Mammary epithelial cell (primary cell): ENCODE measurements at regions of chr5 and their contacts with region 1.

Region 1: GRCh38 chr5:157328277-157328912 is 62.5 kb downstream of the CYFIP2 start:
- DNase-seq: peak; percentile 52
- H3K4me3 ChIP-seq: peak overlapping the region in 1 of 3 experiments; percentile 34
- H3K27ac ChIP-seq: no peak overlapping the region
- H3K4me1 ChIP-seq: no peaks in the 10 kb centered on the region
- H3K27me3 ChIP-seq: no peaks in the 10 kb centered on the region
- CTCF ChIP-seq: peak; percentile 97

Region 2: GRCh38 chr5:157308836-157309465 is 19.4 kb before region 1 on chr5:
- CTCF ChIA-PET with region 1: no interaction called
- dilution Hi-C with region 1: no loop called
- in situ Hi-C with region 1: no loop called
- intact Hi-C with region 1: no loop called
- DNase-seq: no peak
- H3K4me3 ChIP-seq: no peak overlapping the region
- H3K27ac ChIP-seq: no peak overlapping the region
- H3K4me1 ChIP-seq: no peaks in the 10 kb centered on the region
- H3K27me3 ChIP-seq: no peaks in the 10 kb centered on the region
- CTCF ChIP-seq: peak in 1 of 2 donors; percentile 11

Region 3: DNA sequence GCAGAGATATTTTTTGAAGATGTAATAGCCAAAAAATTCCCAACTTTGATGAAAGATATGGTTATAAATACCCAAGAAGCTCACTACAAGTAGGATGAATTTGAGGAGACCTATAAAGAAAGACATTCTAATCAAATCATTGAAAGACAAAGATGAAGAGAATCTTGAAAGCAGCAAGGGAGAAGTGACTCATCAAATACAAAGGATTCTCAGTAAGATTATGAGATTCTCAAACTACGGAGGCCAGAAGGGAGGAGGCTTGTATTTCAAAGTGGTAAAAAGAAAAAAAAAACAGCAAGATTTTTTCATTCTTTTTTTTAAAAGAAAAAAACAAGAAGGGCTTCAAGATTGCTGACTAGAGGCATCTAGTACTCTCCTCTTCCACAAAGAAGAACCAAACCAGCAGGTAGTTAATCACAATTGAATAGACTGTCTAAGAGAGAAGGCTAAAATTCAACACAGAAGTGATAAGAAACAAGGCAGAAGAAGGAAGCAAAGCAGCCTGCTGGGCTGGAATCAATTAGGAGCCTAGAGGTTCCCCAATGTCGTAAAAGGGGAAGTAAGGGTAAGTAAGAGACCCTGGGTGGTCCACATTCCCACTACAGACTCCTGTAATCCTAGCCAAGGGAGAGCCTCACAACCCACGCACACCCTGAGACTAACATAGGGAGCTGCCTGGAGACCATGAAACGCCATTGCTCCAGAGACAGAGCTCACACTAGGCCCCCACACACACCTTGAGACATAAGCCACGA is 72.5 kb after region 1 on chr5:
- CTCF ChIA-PET with region 1: interaction called, 14 read pairs
- dilution Hi-C with region 1: no loop called
- in situ Hi-C with region 1: no loop called
- intact Hi-C with region 1: no loop called
- DNase-seq: no peak
- H3K4me3 ChIP-seq: no peak overlapping the region
- H3K27ac ChIP-seq: no peak overlapping the region
- H3K4me1 ChIP-seq: no peaks in the 10 kb centered on the region
- H3K27me3 ChIP-seq: no peaks in the 10 kb centered on the region
- CTCF ChIP-seq: no peak